A549 (cell line): ENCODE measurements at regions of chr10 and their contacts with region 1.

Region 1: DNA sequence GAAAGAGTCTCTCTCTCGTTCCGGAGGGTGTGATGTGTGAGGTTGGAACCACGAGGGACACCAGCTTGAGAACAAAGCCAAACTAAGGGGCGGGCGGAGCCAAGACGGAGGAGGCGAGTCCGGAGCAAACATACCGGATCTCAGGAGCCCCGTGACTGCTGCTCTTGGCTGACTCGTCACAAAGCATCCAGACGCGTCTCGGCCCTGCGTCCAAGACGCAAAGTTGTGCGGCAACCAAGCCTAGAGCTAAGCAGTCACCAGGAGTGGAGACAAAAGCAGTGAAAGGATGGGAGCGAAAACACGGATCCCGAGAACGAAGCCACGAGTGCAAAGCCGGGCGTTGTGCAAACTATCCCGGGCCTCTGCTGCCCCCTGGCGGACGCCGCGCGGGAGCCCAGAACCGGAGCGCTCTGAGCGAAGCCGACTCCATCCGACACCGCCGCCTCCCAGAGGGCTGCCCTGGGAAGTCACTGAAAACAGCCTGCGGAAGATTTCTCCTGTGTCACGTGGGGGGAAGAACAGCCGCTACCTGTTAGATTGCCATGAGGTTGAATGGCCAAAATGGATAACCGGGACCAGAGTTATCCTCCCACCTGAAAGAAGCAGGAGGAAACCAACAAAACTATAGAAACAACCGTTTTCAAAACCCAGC is 46.4 kb upstream of the TMEM72 start:
- DNase-seq: peak; percentile 78 to 84
- ATAC-seq: peak; percentile 95 to 99
- H3K4me3 ChIP-seq: peak overlapping the region; percentile 54
- H3K27ac ChIP-seq: peak overlapping the region; percentile 57 to 72
- H3K4me1 ChIP-seq: peaks cover 7% of the 10 kb centered on the region; the same call in 2 of the 3 replicates
- CTCF ChIP-seq: peak; percentile 92
- EP300 ChIP-seq: no peak
- POLR2A ChIP-seq: 0 out of 2 replicates have a peak, but pooled peaks have one; percentile 8
- RAD21 ChIP-seq: peak; percentile 77 to 86

Region 2: DNA sequence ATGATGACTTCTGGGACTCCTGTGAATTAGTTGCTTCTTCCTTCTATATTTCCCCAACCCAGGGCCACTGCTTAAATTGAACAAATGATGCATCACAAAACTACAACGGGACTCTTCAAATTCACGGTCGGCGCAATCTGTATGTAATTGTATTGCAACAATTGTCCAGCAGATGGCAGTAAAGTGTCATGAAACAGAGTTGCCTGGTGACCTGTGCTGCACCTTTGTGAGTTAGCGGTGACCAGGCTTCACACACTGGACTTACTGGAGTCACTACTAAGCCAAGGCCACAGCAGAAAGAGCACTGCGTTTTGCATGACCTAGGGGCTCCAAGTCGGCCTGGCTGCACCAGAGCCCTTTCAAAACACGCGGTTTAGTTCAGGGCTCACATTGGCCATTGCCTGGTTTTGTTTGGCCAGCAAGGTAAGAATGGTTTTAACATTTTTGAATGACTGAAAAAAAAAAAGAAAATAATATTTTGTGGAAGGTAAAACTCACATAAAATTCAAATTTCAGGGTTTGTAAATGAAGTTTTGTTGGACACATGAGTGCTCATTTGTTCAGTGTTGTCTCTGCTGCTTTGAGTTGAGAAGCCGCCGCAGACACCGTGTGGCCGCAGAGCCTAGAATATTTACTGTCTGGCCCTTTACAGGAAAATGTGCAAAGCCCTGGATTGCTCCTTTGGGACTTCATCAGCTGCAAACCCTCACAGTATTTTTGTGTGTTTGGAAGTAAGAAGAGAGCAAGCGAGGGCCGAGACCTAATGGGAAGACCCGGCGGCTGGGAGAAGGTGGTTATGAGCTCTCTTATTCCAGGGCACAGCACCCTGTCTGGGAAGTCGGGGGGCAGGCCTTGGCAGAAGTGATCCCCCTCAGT is 1192.9 kb before region 1 on chr10:
- CTCF ChIA-PET with region 1: interaction called, 16 read pairs
- POLR2A ChIA-PET with region 1: no interaction called
- DNase-seq: peak; percentile 70 to 80
- ATAC-seq: peak; percentile 65 to 85; a peak in 5 of 6 replicates
- H3K4me3 ChIP-seq: no peak overlapping the region
- H3K27ac ChIP-seq: no peak overlapping the region
- H3K4me1 ChIP-seq: no peaks in the 10 kb centered on the region
- CTCF ChIP-seq: peak; percentile 79
- EP300 ChIP-seq: no peak
- POLR2A ChIP-seq: no peak
- RAD21 ChIP-seq: peak; percentile 87 to 91

Region 3: DNA sequence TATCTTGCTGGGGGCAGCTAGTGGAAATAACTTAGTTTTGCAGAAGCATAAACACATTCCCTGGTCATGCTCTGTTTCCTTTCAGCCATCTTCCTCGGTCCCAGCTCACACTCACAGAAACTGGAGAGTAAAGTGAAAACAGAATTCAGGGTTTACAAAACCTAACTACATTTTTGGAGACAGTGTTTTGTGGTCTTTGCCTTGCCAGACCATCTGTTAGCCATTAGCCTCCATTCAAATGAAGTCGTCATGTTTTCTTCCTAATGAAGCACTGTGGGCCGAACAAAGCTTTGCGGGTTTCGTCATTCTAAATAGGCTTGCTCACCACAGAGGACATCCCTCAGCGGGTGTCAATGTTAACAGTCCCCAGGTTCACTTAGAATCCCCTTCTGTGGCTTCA is 168.3 kb before region 1 on chr10:
- CTCF ChIA-PET with region 1: no interaction called
- POLR2A ChIA-PET with region 1: no interaction called
- DNase-seq: no peak
- ATAC-seq: no peak
- H3K4me3 ChIP-seq: no peak overlapping the region
- H3K27ac ChIP-seq: no peak overlapping the region
- H3K4me1 ChIP-seq: no peaks in the 10 kb centered on the region
- CTCF ChIP-seq: no peak
- EP300 ChIP-seq: no peak
- POLR2A ChIP-seq: no peak
- RAD21 ChIP-seq: no peak

Region 4: DNA sequence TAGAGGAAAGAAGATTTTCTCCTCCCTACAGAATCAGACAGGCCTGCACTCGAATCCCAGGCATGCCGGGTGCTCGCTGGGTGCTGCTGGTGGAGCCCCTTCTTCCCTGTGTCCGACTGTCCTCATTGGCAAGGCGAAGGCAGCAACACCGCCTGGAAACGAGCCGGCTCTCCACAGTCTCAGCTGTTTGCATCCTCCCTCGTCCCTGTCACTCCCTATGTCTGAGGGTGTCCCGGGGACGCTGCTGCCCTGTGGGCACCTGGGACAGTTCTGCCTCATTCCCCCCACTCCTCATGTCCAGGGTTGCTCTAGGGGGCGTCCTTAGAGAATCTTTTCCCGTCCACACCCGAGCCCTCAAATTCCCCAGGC is 14.8 kb after region 1 on chr10:
- CTCF ChIA-PET with region 1: interaction called, 24 read pairs
- POLR2A ChIA-PET with region 1: no interaction called
- DNase-seq: no peak
- ATAC-seq: no peak
- H3K4me3 ChIP-seq: no peak overlapping the region
- H3K27ac ChIP-seq: no peak overlapping the region
- H3K4me1 ChIP-seq: no peaks in the 10 kb centered on the region
- CTCF ChIP-seq: no peak
- EP300 ChIP-seq: no peak
- POLR2A ChIP-seq: no peak
- RAD21 ChIP-seq: no peak

Region 5: GRCh38 chr10:44895280-44895679 is 30.5 kb after region 1 on chr10:
- CTCF ChIA-PET with region 1: no interaction called
- POLR2A ChIA-PET with region 1: no interaction called
- DNase-seq: no peak
- ATAC-seq: no peak
- H3K4me3 ChIP-seq: no peak overlapping the region
- H3K27ac ChIP-seq: no peak overlapping the region
- H3K4me1 ChIP-seq: no peaks in the 10 kb centered on the region
- CTCF ChIP-seq: no peak
- EP300 ChIP-seq: no peak
- POLR2A ChIP-seq: no peak
- RAD21 ChIP-seq: no peak

Region 6: GRCh38 chr10:44969854-44970520 is 105.2 kb after region 1 on chr10:
- CTCF ChIA-PET with region 1: no interaction called
- POLR2A ChIA-PET with region 1: no interaction called
- DNase-seq: no peak
- ATAC-seq: no peak
- H3K4me3 ChIP-seq: no peak overlapping the region
- H3K27ac ChIP-seq: no peak overlapping the region
- H3K4me1 ChIP-seq: peaks cover 12% of the 10 kb centered on the region; the same call in 2 of the 3 replicates
- CTCF ChIP-seq: no peak
- EP300 ChIP-seq: no peak
- POLR2A ChIP-seq: no peak
- RAD21 ChIP-seq: no peak